ENCODE measurements at regions of chr17 and their contacts with region 1.

Region 1: DNA sequence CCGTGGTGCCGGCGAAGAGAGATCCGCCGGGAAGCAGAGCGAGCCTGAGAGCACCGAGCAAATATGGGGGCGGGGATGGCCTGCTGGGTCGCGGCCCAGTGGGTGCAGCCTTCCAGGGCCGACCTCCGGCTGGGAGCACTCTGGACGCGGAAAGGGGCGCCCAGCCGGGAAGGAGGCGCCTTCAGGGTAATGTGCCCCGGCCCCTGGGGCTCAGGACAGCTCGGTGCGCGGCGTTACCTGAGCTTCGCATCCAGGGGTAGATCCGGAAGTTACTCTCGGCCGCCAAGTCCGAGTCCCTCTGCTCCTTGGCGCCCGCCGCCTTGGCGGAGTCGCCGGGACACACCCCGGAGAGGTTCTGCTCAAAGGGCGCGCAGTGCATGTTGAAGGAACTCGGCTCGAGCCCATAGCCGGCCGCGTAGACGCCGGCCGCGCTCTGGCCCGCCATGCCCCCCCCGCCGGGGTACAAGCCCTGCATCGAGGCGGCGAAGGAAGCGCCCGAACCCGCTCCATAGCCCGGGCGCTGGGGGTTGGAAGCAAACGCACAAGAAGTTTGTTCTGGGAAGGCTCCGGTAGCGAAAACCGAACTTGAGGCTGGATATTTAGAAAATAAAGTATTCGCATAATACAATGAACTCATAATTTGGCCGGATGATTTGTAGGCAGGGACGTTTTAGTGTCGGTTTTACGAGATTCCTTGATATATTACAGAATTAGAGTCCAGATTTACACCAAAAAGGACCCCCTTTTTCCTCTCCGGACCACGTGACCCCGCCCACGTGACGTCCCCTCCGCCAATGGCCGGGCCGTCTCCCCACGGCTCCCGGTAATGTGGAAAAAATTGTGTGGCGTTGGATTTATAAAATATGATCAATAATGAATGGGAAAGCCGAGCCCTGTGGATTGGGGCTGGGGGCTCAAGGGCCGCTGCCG is at the start of gene HOXB7:
- DNase-seq: peak; percentile 68
- ATAC-seq: peak; percentile 43
- H3K4me3 Mint-ChIP-seq: peak within 1 kb of the TSS; percentile 95
- H3K27ac Mint-ChIP-seq: peak within 1 kb of the TSS; percentile 59
- H3K4me1 Mint-ChIP-seq: peaks cover 37% of the 10 kb centered on the region
- H3K27me3 Mint-ChIP-seq: peaks cover 42% of the 10 kb centered on the region
- CTCF ChIP-seq: no peak
- total RNA-seq, gene HOXB7: 0.60 and 0.93 TPM in 2 replicates

Region 2: GRCh38 chr17:48472411-48473281 is 137.9 kb before region 1 on chr17:
- CTCF ChIA-PET with region 1: no interaction called
- POLR2A ChIA-PET with region 1: no interaction called
- intact Hi-C with region 1: no loop called
- DNase-seq: no peak
- ATAC-seq: no peak
- H3K4me3 Mint-ChIP-seq: no peak overlapping the region
- H3K27ac Mint-ChIP-seq: no peak overlapping the region
- H3K4me1 Mint-ChIP-seq: peaks cover under 1% of the 10 kb centered on the region
- H3K27me3 Mint-ChIP-seq: no peaks in the 10 kb centered on the region
- CTCF ChIP-seq: no peak

Region 3: GRCh38 chr17:48483471-48484131 is 126.9 kb before region 1 on chr17:
- CTCF ChIA-PET with region 1: no interaction called
- POLR2A ChIA-PET with region 1: no interaction called
- intact Hi-C with region 1: no loop called
- DNase-seq: no peak
- ATAC-seq: peak; percentile 77
- H3K4me3 Mint-ChIP-seq: no peak overlapping the region
- H3K27ac Mint-ChIP-seq: no peak overlapping the region
- H3K4me1 Mint-ChIP-seq: peaks cover 17% of the 10 kb centered on the region
- H3K27me3 Mint-ChIP-seq: peaks cover 6% of the 10 kb centered on the region
- CTCF ChIP-seq: no peak

Region 4: GRCh38 chr17:48577946-48578615 is 32.5 kb before region 1 on chr17 and contains the start of gene HOXB4:
- CTCF ChIA-PET with region 1: interaction called, 4 read pairs
- POLR2A ChIA-PET with region 1: no interaction called
- intact Hi-C with region 1: loop called (anchors 1 kb)
- DNase-seq: peak; percentile 42
- ATAC-seq: peak; percentile 80
- H3K4me3 Mint-ChIP-seq: peak within 1 kb of the TSS; percentile 90
- H3K27ac Mint-ChIP-seq: peak within 1 kb of the TSS; percentile 60
- H3K4me1 Mint-ChIP-seq: peaks cover 49% of the 10 kb centered on the region
- H3K27me3 Mint-ChIP-seq: peaks cover 41% of the 10 kb centered on the region
- CTCF ChIP-seq: no peak
- total RNA-seq, gene HOXB4: 0.88 and 1.4 TPM in 2 replicates

Region 5: DNA sequence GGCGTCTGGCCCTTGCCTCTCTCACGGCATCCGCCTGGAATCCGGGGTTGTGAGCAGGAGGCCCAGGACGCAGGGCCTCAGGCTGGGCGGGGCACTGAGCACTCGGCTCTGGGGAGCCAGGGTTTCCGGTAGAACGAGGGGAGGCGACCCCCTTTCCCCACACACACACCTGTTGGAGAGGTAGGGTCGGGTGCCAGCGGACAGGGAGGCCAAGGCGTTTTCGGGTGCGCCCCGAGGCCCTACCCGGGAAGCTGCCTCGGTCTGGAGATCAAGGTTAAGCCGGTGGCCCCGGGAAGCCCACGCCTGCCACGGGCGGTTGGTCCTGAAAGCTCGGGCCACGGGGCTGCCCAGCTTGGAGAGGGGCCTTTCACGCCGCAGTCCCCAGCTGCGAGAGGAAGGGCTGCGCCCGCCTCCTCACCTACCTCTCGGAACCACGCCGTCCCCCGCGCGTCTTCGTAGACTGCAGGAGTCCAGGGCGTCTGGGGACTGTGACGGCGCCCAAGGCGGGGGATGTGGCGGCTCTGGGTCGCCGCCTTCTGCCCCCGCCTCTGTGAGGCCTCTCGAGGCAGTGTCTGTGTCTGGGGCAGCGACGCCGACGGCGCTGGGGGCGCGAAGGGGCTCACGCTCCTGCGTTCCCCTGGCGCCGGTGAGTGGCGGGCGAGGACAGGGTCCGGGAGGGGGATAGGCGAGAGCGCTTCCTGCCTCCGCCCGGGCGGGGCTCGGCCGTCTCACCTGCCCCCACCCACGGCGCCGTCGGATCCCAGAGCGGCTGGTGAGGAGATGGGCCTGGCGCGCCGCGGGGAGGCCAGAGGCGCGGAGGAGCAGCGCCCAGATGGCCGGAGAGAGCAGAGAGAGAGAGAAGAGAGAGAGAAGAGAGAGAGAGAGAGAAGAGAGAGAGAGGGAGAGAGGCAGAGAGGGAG is 35.9 kb after region 1 on chr17:
- CTCF ChIA-PET with region 1: no interaction called
- POLR2A ChIA-PET with region 1: no interaction called
- intact Hi-C with region 1: no loop called
- DNase-seq: peak; percentile 27
- ATAC-seq: peak; percentile 56
- H3K4me3 Mint-ChIP-seq: peak overlapping the region; percentile 89
- H3K27ac Mint-ChIP-seq: no peak overlapping the region
- H3K4me1 Mint-ChIP-seq: peaks cover 27% of the 10 kb centered on the region
- H3K27me3 Mint-ChIP-seq: peaks cover 58% of the 10 kb centered on the region
- CTCF ChIP-seq: no peak

Region 6: GRCh38 chr17:48718761-48719641 is 108.5 kb after region 1 on chr17:
- CTCF ChIA-PET with region 1: interaction called, 4 read pairs
- POLR2A ChIA-PET with region 1: no interaction called
- intact Hi-C with region 1: loop called (anchors 2 kb)
- DNase-seq: peak; percentile 34
- ATAC-seq: no peak
- H3K4me3 Mint-ChIP-seq: peak overlapping the region; percentile 38
- H3K27ac Mint-ChIP-seq: peak overlapping the region; percentile 56
- H3K4me1 Mint-ChIP-seq: peaks cover 22% of the 10 kb centered on the region
- H3K27me3 Mint-ChIP-seq: peaks cover 70% of the 10 kb centered on the region
- CTCF ChIP-seq: no peak

Region 7: GRCh38 chr17:48747445-48748363 is 137.2 kb after region 1 on chr17:
- CTCF ChIA-PET with region 1: no interaction called
- POLR2A ChIA-PET with region 1: interaction called, 13 read pairs
- intact Hi-C with region 1: loop called (anchors 5 kb)
- DNase-seq: no peak
- ATAC-seq: no peak
- H3K4me3 Mint-ChIP-seq: no peak overlapping the region
- H3K27ac Mint-ChIP-seq: no peak overlapping the region
- H3K4me1 Mint-ChIP-seq: peaks cover 3% of the 10 kb centered on the region
- H3K27me3 Mint-ChIP-seq: peaks cover 60% of the 10 kb centered on the region
- CTCF ChIP-seq: no peak